ENCODE measurements at regions of chr3 and their contacts with region 1.

Region 1: GRCh38 chr3:46866720-46867549 is 3.7 kb upstream of the MYL3 start:
- DNase-seq: peak; percentile 81 to 86
- ATAC-seq: peak; percentile 62 to 86 (median 86)
- H3K4me3 ChIP-seq: no peak overlapping the region
- H3K4me3 Mint-ChIP-seq: no peak overlapping the region
- H3K27ac ChIP-seq: no peak overlapping the region
- H3K27ac Mint-ChIP-seq: no peak overlapping the region
- H3K4me1 ChIP-seq: no peaks in the 10 kb centered on the region
- H3K4me1 Mint-ChIP-seq: no peaks in the 10 kb centered on the region
- H3K27me3 ChIP-seq: no peaks in the 10 kb centered on the region
- H3K27me3 Mint-ChIP-seq: no peaks in the 10 kb centered on the region
- CTCF ChIP-seq: peak; percentile 83

Region 2: GRCh38 chr3:46049116-46049515 is 817.8 kb before region 1 on chr3:
- intact Hi-C with region 1: no loop called
- DNase-seq: no peak
- ATAC-seq: no peak
- H3K4me3 ChIP-seq: no peak overlapping the region
- H3K4me3 Mint-ChIP-seq: no peak overlapping the region
- H3K27ac ChIP-seq: no peak overlapping the region
- H3K27ac Mint-ChIP-seq: no peak overlapping the region
- H3K4me1 ChIP-seq: peaks cover 9% of the 10 kb centered on the region
- H3K4me1 Mint-ChIP-seq: peaks cover 16% of the 10 kb centered on the region in 2 donors
- H3K27me3 ChIP-seq: no peaks in the 10 kb centered on the region
- H3K27me3 Mint-ChIP-seq: peaks cover 6 to 14% of the 10 kb centered on the region in 2 donors
- CTCF ChIP-seq: no peak

Region 3: DNA sequence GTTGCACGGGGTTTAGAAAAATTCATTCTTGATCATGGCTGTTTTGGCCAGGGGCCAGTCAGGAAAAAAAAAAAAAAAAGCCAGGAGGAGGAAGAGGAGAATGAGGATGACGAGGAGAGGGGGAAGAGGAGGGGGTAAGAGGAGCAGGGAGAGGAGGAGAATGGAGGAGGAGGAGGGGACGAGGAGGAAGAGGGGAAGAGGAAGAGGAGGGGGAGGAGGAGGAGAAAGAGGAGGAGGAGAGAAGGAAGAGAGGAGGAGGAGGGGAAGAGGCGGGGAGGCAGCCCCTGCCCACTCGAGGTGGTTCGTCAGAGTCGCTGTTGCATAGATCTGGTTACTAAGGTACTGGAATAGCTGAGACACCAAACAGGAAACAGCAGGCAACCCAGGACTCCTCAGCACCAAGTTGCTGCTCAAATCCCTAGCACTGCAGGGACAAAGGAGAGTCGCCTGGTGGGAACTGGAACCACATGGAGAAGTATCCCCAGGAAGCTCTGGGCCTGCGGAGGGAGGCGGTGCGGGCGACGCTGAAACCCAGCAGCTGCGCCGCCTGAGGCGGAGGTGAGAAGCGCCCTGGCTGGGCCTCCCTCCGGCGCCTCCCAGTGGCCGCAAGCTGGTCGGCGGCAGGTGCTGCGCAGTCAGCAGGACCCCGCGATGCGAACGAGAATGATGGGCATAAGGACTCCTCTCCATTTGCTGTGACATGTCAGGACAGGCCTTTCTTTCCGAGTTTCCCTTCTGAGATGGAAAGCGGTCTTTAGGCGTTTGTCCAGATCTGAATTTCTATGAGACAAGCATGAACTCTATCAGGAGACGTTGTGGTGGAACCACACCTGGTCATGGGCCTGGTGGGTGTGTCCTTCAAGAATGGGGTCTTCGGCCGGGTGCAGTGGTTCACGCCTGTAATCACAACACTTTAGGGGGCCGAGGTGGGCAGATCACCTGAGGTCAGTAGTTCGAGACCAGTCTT is 237.1 kb before region 1 on chr3:
- intact Hi-C with region 1: no loop called
- DNase-seq: peak; percentile 72 to 89
- ATAC-seq: peak; percentile 93 to 100 (median 100)
- H3K4me3 ChIP-seq: peak overlapping the region; percentile 9
- H3K4me3 Mint-ChIP-seq: peak overlapping the region; percentile 66
- H3K27ac ChIP-seq: no peak overlapping the region
- H3K27ac Mint-ChIP-seq: peak overlapping the region in 1 of 2 donors; percentile 71
- H3K4me1 ChIP-seq: peaks cover 12% of the 10 kb centered on the region
- H3K4me1 Mint-ChIP-seq: peaks cover 5 to 12% of the 10 kb centered on the region in 2 donors
- H3K27me3 ChIP-seq: no peaks in the 10 kb centered on the region
- H3K27me3 Mint-ChIP-seq: peaks cover 0 to 6% of the 10 kb centered on the region in 2 donors
- CTCF ChIP-seq: peak; percentile 99

Region 4: DNA sequence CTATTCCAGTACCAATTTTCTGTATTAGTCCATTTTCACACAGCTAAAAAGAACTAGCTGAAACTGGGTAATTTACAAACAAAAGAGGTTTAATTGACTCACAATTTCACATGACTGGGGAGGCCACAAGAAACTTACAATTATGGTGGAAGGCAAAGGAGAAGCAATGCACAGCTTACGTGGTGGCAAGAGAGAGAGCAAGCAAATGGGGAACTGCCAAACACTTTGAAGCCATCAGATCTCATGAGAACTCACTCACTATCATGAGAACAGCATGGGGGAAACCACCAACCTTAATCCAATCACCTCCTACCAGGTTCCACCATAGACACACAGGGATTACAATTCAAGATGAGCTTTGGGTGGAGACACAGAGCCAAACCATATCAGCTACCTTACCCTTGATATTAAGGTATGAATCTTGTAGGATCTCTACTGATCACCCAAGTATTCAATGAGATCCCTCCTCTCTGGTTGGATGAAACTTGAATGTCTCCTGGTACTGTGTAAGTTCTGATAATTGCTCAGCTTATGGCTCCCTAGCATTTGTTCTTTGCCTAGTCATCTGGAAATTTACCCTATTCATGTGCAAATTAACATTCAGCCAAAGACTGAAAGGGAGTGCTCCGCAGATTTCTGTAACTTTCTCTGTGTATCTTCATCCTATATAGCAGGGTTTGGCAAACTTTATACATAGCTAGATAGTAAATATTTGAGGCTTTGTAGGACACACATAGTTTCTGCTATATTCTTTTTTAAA is 42.5 kb before region 1 on chr3:
- intact Hi-C with region 1: no loop called
- DNase-seq: no peak
- ATAC-seq: no peak
- H3K4me3 ChIP-seq: no peak overlapping the region
- H3K4me3 Mint-ChIP-seq: no peak overlapping the region
- H3K27ac ChIP-seq: no peak overlapping the region
- H3K27ac Mint-ChIP-seq: no peak overlapping the region
- H3K4me1 ChIP-seq: peaks cover 1% of the 10 kb centered on the region
- H3K4me1 Mint-ChIP-seq: peaks cover 14 to 17% of the 10 kb centered on the region in 2 donors
- H3K27me3 ChIP-seq: no peaks in the 10 kb centered on the region
- H3K27me3 Mint-ChIP-seq: peaks cover 0 to 2% of the 10 kb centered on the region in 2 donors
- CTCF ChIP-seq: no peak

Region 5: DNA sequence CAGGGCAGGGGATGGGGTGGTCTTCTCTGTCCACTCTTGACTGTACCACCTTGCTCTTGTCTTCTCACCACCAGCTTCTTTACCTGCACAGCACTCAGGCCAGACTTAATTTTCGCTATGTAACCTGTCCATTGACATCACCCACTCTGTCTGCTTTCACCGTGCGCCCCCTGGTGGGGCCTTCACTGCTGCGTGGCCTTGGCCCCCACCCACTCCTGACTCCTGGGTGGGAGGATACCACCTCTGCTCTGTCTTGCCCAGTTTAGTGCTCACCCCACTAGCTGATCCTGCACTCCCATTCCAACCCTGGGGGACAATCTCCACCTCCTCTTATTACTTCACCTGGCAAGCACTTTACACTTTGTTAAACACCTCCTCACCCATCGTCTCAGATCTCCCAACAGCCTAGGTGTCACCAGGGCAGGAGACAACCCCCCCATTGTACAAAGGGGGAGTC is 28.3 kb after region 1 on chr3:
- intact Hi-C with region 1: loop called (anchors 1 kb)
- DNase-seq: peak; percentile 75 to 86
- ATAC-seq: peak; percentile 63 to 81 (median 78)
- H3K4me3 ChIP-seq: no peak overlapping the region
- H3K4me3 Mint-ChIP-seq: no peak overlapping the region
- H3K27ac ChIP-seq: no peak overlapping the region
- H3K27ac Mint-ChIP-seq: no peak overlapping the region
- H3K4me1 ChIP-seq: peaks cover 22% of the 10 kb centered on the region
- H3K4me1 Mint-ChIP-seq: peaks cover 0 to 38% of the 10 kb centered on the region in 2 donors
- H3K27me3 ChIP-seq: peaks cover 22% of the 10 kb centered on the region
- H3K27me3 Mint-ChIP-seq: peaks cover 26% of the 10 kb centered on the region in 2 donors
- CTCF ChIP-seq: peak; percentile 79

Region 6: DNA sequence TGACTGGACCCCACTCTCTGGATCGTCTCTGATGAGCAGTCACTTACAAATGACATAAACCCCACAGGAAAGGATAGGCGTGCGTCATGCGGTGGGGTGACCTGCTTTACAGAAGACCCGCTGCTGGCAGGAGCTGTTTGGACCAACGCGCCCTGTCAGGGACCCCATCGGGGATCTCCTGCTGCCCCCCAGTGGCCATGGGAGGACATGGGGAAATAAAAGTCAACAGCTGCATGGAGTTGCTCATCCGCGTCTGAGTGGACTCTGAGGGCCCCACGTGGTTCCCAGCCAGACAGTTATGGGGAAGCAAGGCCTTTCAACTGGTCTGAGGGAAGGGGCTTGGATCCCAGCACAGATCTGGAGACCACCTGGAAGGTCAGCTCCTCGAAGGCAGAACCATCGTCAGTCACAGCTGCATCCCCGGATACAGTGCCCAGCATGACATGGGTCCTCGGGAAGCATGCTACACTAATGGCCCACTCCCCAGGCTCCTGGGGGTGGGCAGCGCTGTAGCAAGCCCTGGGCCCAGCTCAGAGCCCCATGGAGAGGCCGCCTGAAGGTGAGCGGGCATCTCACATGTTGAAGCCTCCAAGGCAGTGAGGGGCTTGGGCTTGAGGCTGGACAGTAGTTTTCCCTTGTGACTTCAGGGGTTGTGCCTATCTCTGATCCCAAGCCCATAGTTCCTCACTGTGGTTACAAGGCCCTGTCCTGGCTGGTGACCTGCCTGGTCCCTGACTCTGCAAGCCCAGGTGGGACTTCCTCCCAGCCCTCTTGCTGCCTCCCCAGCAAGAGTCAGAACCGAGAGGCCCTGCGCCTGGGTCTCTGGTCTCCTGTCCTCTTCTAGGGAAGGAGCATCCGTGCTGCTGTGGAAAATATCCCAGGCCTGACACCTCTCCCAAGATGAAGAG is 42.9 kb after region 1 on chr3:
- intact Hi-C with region 1: loop called (anchors 1 kb)
- DNase-seq: peak; percentile 81 to 84
- ATAC-seq: peak; percentile 87 to 96 (median 92)
- H3K4me3 ChIP-seq: no peak overlapping the region
- H3K4me3 Mint-ChIP-seq: no peak overlapping the region
- H3K27ac ChIP-seq: no peak overlapping the region
- H3K27ac Mint-ChIP-seq: peak overlapping the region in 1 of 2 donors; percentile 52
- H3K4me1 ChIP-seq: peaks cover 21% of the 10 kb centered on the region
- H3K4me1 Mint-ChIP-seq: peaks cover 16 to 17% of the 10 kb centered on the region in 2 donors
- H3K27me3 ChIP-seq: no peaks in the 10 kb centered on the region
- H3K27me3 Mint-ChIP-seq: no peaks in the 10 kb centered on the region
- CTCF ChIP-seq: peak; percentile 95

Region 7: DNA sequence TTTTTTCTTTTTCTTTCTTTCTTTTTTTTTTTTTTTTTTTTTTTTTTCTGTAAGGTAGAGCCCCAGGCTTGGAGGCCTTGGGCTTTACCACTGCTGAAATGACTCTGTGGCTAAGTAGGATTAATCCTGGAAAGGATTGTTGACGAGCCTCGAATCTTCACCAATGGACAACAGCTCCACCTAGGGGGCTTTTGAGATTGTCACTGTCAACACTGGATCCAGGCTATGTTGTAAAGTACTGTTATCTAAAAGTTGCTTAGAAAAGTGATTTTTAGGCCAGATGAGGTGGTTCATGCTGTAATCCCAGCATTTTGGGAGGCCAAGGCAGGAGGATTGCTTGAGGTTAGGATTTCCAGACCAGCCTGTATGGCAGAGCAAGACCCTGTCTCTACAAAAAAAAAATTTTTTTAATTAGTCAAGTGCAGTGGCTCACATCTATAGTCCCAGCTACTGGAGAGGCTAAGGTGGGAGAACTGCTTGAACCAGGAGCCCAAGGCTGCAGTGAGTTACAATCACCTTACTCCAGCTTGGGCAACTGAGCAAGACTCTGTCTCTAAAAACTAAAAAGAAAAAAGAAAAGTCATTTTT is 457.4 kb after region 1 on chr3:
- intact Hi-C with region 1: loop called (anchors 2 kb)
- DNase-seq: peak; percentile 22 to 76
- ATAC-seq: peak; percentile 53 to 72 (median 56)
- H3K4me3 ChIP-seq: no peak overlapping the region
- H3K4me3 Mint-ChIP-seq: no peak overlapping the region
- H3K27ac ChIP-seq: no peak overlapping the region
- H3K27ac Mint-ChIP-seq: peak overlapping the region in 1 of 2 donors; percentile 75
- H3K4me1 ChIP-seq: no peaks in the 10 kb centered on the region
- H3K4me1 Mint-ChIP-seq: peaks cover 6 to 8% of the 10 kb centered on the region in 2 donors
- H3K27me3 ChIP-seq: no peaks in the 10 kb centered on the region
- H3K27me3 Mint-ChIP-seq: no peaks in the 10 kb centered on the region
- CTCF ChIP-seq: peak; percentile 74